Transverse colon (tissue), 4 donors: ENCODE measurements at regions of chr6 and their contacts with region 1.

Region 1: GRCh38 chr6:15691250-15691869 is 28.5 kb upstream of the DTNBP1 start:
- DNase-seq: peak; percentile 85
- H3K4me3 ChIP-seq: peak overlapping the region in 3 of 4 donors; percentile 3 to 46 (median 14)
- H3K27ac ChIP-seq: peak overlapping the region; percentile 13 to 59 (median 44)
- H3K4me1 ChIP-seq: peaks cover 0 to 13% (median 5%) of the 10 kb centered on the region in 4 donors
- H3K27me3 ChIP-seq: no peaks in the 10 kb centered on the region
- CTCF ChIP-seq: peak; percentile 98 to 100 (median 99)
- EP300 ChIP-seq: no peak
- POLR2A ChIP-seq: no peak

Region 2: DNA sequence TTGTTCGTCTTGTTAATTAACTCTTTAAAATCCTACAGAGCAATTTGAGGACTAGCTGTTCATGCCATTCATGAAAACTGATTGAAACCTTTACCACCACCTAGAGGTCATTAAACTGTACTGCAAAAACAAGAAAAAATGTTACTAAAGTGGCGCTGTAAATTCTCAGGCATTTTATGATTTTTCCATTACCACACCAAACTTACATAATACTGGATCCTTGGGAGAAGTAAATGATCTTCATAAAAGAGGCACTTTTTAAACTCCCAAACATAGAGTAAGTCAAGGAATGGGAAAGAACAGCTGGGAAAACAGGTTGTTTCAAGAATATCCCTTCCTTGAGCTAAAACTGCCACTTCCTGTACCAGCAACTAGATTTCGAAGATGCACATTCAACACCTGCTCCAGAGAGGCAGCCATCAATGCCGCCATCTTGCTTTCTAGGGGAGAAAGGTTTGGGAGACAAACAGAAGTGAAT is 491.9 kb after region 1 on chr6:
- in situ Hi-C with region 1: loop called in 1 of 4 experiments (anchors 10 kb)
- intact Hi-C with region 1: no loop called
- DNase-seq: no peak
- H3K4me3 ChIP-seq: no peak overlapping the region
- H3K27ac ChIP-seq: peak overlapping the region in 2 of 4 donors; percentile 15 to 59
- H3K4me1 ChIP-seq: peaks cover 0 to 36% (median 13%) of the 10 kb centered on the region in 4 donors
- H3K27me3 ChIP-seq: no peaks in the 10 kb centered on the region
- CTCF ChIP-seq: peak; percentile 67 to 85 (median 81)
- EP300 ChIP-seq: no peak
- POLR2A ChIP-seq: no peak

Region 3: DNA sequence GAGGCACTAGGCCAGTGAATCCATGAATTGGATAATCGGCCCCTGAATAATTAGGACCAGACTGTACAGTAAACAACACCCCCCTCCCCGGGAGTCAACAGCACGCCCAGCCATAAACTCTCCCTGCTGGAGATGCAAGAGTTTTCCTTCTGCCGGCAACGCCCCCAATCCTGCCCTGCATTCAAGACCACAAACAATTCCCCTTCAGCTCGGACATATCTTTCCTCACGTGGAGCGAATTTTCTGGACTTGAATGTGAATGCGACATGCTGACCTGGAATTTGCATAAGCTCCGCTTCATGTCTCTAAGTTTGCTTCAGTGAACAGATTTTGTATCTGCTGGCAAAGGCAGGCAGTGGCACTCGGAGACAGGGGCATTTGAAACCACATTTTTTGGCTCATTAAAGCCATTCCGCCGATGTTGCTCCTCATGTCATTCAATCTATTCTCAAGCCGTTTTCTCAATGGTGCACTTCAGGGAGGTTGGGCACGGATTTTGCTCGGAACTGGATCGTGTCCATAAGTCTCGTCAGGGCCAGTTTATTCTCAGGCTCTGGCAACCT is 509.0 kb after region 1 on chr6:
- in situ Hi-C with region 1: loop called in 3 of 4 experiments (anchors 5 to 10 kb)
- intact Hi-C with region 1: loop called (anchors 5 kb)
- DNase-seq: peak; percentile 41
- H3K4me3 ChIP-seq: peak overlapping the region in 2 of 4 donors; percentile 3 to 7
- H3K27ac ChIP-seq: no peak overlapping the region
- H3K4me1 ChIP-seq: peaks cover 0 to 16% (median 9%) of the 10 kb centered on the region in 4 donors
- H3K27me3 ChIP-seq: no peaks in the 10 kb centered on the region
- CTCF ChIP-seq: no peak
- EP300 ChIP-seq: no peak
- POLR2A ChIP-seq: no peak

Region 4: GRCh38 chr6:16206595-16207037 is 515.3 kb after region 1 on chr6:
- in situ Hi-C with region 1: loop called in 3 of 4 experiments (anchors 5 to 10 kb)
- intact Hi-C with region 1: loop called (anchors 5 kb)
- DNase-seq: peak; percentile 64
- H3K4me3 ChIP-seq: no peak overlapping the region
- H3K27ac ChIP-seq: no peak overlapping the region
- H3K4me1 ChIP-seq: peaks cover 0 to 16% (median 0%) of the 10 kb centered on the region in 4 donors
- H3K27me3 ChIP-seq: no peaks in the 10 kb centered on the region
- CTCF ChIP-seq: peak; percentile 94 to 98 (median 97)
- EP300 ChIP-seq: no peak
- POLR2A ChIP-seq: no peak